Activated CD4-positive, alpha-beta T cell treated with anti-CD3 and anti-CD28 coated beads for 36 hours (primary cell): ENCODE measurements at regions of chr17 and their contacts with region 1.

Region 1: GRCh38 chr17:64420143-64420971 is 28.6 kb upstream of the MILR1 start:
- DNase-seq: no peak
- ATAC-seq: peak; percentile 88
- H3K4me3 Mint-ChIP-seq: no peak overlapping the region
- H3K27ac Mint-ChIP-seq: no peak overlapping the region
- H3K4me1 Mint-ChIP-seq: no peaks in the 10 kb centered on the region
- H3K27me3 Mint-ChIP-seq: no peaks in the 10 kb centered on the region

Region 2: GRCh38 chr17:64281962-64282727 is 138.2 kb before region 1 on chr17:
- CTCF ChIA-PET with region 1: interaction called, 10 read pairs
- POLR2A ChIA-PET with region 1: no interaction called
- intact Hi-C with region 1: no loop called
- DNase-seq: peak; percentile 76
- ATAC-seq: peak; percentile 51
- H3K4me3 Mint-ChIP-seq: no peak overlapping the region
- H3K27ac Mint-ChIP-seq: no peak overlapping the region
- H3K4me1 Mint-ChIP-seq: no peaks in the 10 kb centered on the region
- H3K27me3 Mint-ChIP-seq: no peaks in the 10 kb centered on the region

Region 3: DNA sequence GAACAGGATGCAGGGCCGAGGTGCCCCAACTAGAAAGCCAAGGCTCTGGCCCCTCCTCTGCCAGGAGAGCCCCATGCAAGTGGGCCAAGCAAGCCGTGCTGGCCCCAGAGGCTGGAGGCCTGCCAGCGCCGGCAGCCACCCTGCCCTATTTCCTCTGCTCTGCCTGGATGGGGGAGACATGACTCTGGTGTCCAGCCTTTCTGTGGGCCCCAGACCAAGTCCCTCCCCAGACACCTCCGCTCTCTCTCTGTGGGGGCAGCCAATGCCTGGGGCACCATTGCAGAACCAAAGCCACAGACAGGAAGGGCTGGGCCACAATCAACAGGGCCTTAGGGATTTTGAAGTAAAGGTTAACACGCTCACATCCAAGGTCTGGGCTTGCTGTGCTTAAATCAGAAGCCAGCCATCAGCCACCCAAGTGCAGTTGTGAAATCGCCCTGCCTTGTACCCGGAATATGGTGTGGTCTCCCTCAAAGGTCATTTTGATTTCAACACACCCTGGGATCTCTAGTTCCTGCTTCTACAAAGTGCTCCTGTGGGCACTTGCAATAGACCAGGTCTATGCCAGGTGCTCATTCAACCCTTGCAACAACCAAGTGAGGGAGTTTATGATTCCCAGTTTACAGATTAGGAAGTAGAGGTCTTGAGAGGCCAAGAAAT is 93.8 kb before region 1 on chr17:
- CTCF ChIA-PET with region 1: interaction called, 169 read pairs
- POLR2A ChIA-PET with region 1: no interaction called
- intact Hi-C with region 1: loop called (anchors 1 kb)
- DNase-seq: no peak
- ATAC-seq: no peak
- H3K4me3 Mint-ChIP-seq: no peak overlapping the region
- H3K27ac Mint-ChIP-seq: no peak overlapping the region
- H3K4me1 Mint-ChIP-seq: peaks cover 2% of the 10 kb centered on the region
- H3K27me3 Mint-ChIP-seq: no peaks in the 10 kb centered on the region

Region 4: DNA sequence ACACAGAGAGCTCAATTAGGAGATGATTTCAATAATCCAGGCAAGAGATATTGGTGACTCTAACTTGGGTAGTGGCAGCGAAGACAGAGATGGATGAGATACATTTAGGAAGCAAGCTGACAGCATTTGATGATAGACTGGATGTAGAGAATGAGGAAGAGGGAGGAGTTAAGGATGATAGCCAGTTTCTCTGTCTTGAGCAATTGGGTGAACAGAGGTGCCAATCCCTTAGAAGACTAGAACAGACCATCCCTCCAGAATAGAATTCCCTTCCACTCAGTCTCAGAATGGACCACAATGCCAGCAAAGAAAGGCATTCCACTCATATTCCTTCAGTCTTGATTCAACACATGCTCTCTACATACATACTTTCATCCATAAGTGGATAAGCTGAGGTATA is 59.3 kb after region 1 on chr17:
- CTCF ChIA-PET with region 1: interaction called, 47 read pairs
- POLR2A ChIA-PET with region 1: no interaction called
- intact Hi-C with region 1: no loop called
- DNase-seq: no peak
- ATAC-seq: no peak
- H3K4me3 Mint-ChIP-seq: no peak overlapping the region
- H3K27ac Mint-ChIP-seq: no peak overlapping the region
- H3K4me1 Mint-ChIP-seq: peaks cover 4% of the 10 kb centered on the region
- H3K27me3 Mint-ChIP-seq: no peaks in the 10 kb centered on the region

Region 5: GRCh38 chr17:64506576-64507477 is 86.5 kb after region 1 on chr17 and contains the start of gene CEP95:
- CTCF ChIA-PET with region 1: interaction called, 6 read pairs
- POLR2A ChIA-PET with region 1: interaction called, 3 read pairs
- intact Hi-C with region 1: loop called in 1 of 2 experiments (anchors 1 kb)
- DNase-seq: peak; percentile 97
- ATAC-seq: peak; percentile 56
- H3K4me3 Mint-ChIP-seq: peak within 1 kb of the TSS; percentile 100
- H3K27ac Mint-ChIP-seq: peak within 1 kb of the TSS; percentile 100
- H3K4me1 Mint-ChIP-seq: peaks cover 48% of the 10 kb centered on the region
- H3K27me3 Mint-ChIP-seq: no peaks in the 10 kb centered on the region
- total RNA-seq, gene CEP95: 40.5 to 42.8 TPM

Region 6: DNA sequence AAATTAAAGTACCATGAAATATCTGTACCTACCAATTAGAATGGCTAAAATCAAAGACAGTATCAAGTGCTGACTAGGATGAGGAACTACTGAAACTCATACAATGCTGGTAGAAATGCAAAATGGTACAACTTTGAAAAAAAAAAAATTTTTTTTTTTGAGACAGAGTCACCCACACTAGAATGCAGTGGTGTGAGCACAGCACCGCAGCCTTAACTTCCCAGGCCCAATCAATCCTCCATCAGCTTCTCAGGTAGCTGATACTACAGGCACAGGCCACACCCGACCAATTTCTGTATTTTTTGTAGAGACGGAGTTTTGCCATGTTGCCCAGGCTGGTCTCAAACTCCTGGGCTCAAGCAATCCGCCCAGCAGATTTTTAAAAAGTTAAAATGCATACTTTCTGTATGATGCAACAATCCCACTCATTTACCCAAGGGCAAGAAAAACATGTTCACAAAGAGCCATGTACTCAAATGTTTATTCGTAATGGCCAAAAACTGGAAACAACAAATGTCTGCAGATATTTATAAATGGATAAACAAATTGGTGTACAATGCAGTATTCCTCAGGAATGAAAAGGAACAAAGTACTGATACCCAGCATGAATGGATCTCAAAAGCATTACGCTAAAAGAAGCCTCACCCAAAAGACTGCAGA is 233.1 kb after region 1 on chr17:
- CTCF ChIA-PET with region 1: interaction called, 41 read pairs
- POLR2A ChIA-PET with region 1: no interaction called
- intact Hi-C with region 1: loop called (anchors 1 kb)
- DNase-seq: no peak
- ATAC-seq: no peak
- H3K4me3 Mint-ChIP-seq: no peak overlapping the region
- H3K27ac Mint-ChIP-seq: peak overlapping the region; percentile 43
- H3K4me1 Mint-ChIP-seq: peaks cover 42% of the 10 kb centered on the region
- H3K27me3 Mint-ChIP-seq: no peaks in the 10 kb centered on the region